CD4-positive, alpha-beta memory T cell (primary cell): ENCODE measurements at regions of chr5 and their contacts with region 1.

Region 1: DNA sequence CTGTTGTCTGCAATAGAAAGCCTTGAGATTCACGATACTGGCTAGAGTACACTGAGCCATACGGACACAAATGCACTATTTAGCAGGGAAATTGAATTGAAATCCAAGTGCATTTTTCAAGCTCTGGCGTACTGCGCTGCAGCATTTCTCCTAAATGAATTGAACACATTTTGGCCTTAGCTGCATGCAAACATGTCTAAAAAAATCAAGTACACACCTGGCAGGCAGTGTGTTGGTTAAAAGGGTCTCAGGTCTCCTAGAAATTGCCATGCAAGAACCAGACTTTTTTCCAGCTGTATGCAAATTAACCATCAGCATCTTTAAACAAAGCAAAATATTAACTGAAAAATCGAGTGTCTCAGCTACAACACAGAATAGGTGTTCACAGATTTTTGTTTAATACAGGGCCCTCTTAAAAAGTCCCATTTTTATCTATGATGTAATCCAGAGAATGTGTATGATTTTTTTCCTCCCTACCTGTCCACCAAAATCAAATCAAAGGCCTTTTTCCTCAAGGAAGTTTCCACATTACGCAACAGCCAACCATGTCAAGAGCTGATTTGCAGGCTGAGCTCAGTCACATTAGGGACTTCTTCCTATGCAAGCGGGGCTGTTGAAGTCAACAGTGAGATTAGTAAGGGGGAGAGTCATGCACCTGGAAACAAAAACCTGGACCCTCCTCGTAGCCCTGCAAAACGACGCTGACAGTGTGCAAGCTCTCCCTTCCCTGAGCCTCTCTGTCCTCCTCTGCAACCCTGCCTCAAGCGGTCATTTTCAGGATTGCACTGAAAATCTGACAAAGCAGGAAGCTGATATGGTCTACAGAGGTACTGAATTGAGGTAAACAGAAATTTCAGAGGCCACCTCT is 14.1 kb upstream of the SFXN1 start:
- DNase-seq: peak; percentile 43 to 67 (median 57)
- H3K4me3 ChIP-seq: no peak overlapping the region
- H3K4me3 Mint-ChIP-seq: peak overlapping the region in 2 of 8 donors; percentile 13 to 45
- H3K27ac ChIP-seq: no peak overlapping the region
- H3K27ac Mint-ChIP-seq: peak overlapping the region in 3 of 7 donors; percentile 13 to 69 (median 17)
- H3K4me1 ChIP-seq: peaks cover 4% of the 10 kb centered on the region
- H3K4me1 Mint-ChIP-seq: peaks cover 5 to 10% (median 6%) of the 10 kb centered on the region in 4 donors
- H3K27me3 ChIP-seq: no peaks in the 10 kb centered on the region
- H3K27me3 Mint-ChIP-seq: peaks cover 2 to 5% of the 10 kb centered on the region in 2 donors

Region 2: DNA sequence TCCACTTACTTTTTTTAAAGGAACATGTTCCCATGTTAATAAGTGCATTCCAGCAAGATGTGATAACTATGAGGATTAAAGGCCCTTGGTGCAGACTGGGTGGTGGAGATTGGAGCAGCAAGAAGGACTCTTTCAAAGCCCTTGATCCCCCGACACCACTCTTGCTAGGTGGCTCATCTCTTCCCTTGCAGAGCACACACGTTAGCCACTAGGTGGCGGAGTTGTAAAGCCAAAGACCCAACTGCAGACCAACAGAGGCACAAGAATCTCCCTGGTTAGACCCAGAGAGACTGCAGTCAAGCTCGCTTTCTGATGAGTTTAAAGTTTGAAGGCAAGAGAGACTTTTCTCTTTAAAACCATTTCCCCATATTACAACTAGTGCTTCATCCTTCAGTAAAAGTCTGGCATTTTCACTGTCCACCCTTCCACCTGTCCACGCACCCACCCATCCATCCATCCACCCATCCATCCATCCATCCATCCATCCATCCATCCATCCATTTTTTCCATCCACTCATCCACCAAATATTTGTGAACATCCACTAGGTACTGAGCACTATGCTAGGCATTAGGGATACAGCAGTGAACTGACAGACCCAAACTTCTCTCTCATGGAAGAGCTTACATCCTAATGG is 513.0 kb before region 1 on chr5:
- CTCF ChIA-PET with region 1: no interaction called
- POLR2A ChIA-PET with region 1: no interaction called
- intact Hi-C with region 1: loop called (anchors 1 kb)
- DNase-seq: peak; percentile 47 to 61 (median 52)
- H3K4me3 ChIP-seq: no peak overlapping the region
- H3K4me3 Mint-ChIP-seq: no peak overlapping the region
- H3K27ac ChIP-seq: no peak overlapping the region
- H3K27ac Mint-ChIP-seq: no peak overlapping the region
- H3K4me1 ChIP-seq: no peaks in the 10 kb centered on the region
- H3K4me1 Mint-ChIP-seq: no peaks in the 10 kb centered on the region
- H3K27me3 ChIP-seq: no peaks in the 10 kb centered on the region
- H3K27me3 Mint-ChIP-seq: peaks cover 9 to 11% of the 10 kb centered on the region in 2 donors

Region 3: GRCh38 chr5:175214152-175214551 is 250.2 kb before region 1 on chr5:
- CTCF ChIA-PET with region 1: no interaction called
- POLR2A ChIA-PET with region 1: no interaction called
- intact Hi-C with region 1: no loop called
- DNase-seq: no peak
- H3K4me3 ChIP-seq: no peak overlapping the region
- H3K4me3 Mint-ChIP-seq: no peak overlapping the region
- H3K27ac ChIP-seq: no peak overlapping the region
- H3K27ac Mint-ChIP-seq: no peak overlapping the region
- H3K4me1 ChIP-seq: no peaks in the 10 kb centered on the region
- H3K4me1 Mint-ChIP-seq: no peaks in the 10 kb centered on the region
- H3K27me3 ChIP-seq: no peaks in the 10 kb centered on the region
- H3K27me3 Mint-ChIP-seq: peaks cover 0 to 15% of the 10 kb centered on the region in 2 donors

Region 4: GRCh38 chr5:175383350-175383749 is 81.0 kb before region 1 on chr5:
- CTCF ChIA-PET with region 1: no interaction called
- POLR2A ChIA-PET with region 1: no interaction called
- intact Hi-C with region 1: no loop called
- DNase-seq: no peak
- H3K4me3 ChIP-seq: no peak overlapping the region
- H3K4me3 Mint-ChIP-seq: no peak overlapping the region
- H3K27ac ChIP-seq: no peak overlapping the region
- H3K27ac Mint-ChIP-seq: no peak overlapping the region
- H3K4me1 ChIP-seq: no peaks in the 10 kb centered on the region
- H3K4me1 Mint-ChIP-seq: no peaks in the 10 kb centered on the region
- H3K27me3 ChIP-seq: no peaks in the 10 kb centered on the region
- H3K27me3 Mint-ChIP-seq: peaks cover 2 to 10% of the 10 kb centered on the region in 2 donors

Region 5: GRCh38 chr5:175478384-175479124 is 14.2 kb after region 1 on chr5 and contains the start of gene SFXN1:
- CTCF ChIA-PET with region 1: interaction called, 45 read pairs
- POLR2A ChIA-PET with region 1: interaction called, 42 read pairs
- intact Hi-C with region 1: loop called (anchors 2 kb)
- DNase-seq: peak; percentile 69 to 80 (median 74)
- H3K4me3 ChIP-seq: peak within 1 kb of the TSS; percentile 65 to 84
- H3K4me3 Mint-ChIP-seq: peak within 1 kb of the TSS; percentile 92 to 98 (median 96)
- H3K27ac ChIP-seq: peak within 1 kb of the TSS; percentile 60
- H3K27ac Mint-ChIP-seq: peak within 1 kb of the TSS; percentile 89 to 98 (median 93)
- H3K4me1 ChIP-seq: peaks cover 47% of the 10 kb centered on the region
- H3K4me1 Mint-ChIP-seq: peaks cover 42 to 67% (median 52%) of the 10 kb centered on the region in 4 donors
- H3K27me3 ChIP-seq: no peaks in the 10 kb centered on the region
- H3K27me3 Mint-ChIP-seq: no peaks in the 10 kb centered on the region
- total RNA-seq, gene SFXN1: 99.2 to 111 TPM

Region 6: GRCh38 chr5:175487514-175488222 is 23.4 kb after region 1 on chr5:
- CTCF ChIA-PET with region 1: interaction called, 13 read pairs
- POLR2A ChIA-PET with region 1: no interaction called
- intact Hi-C with region 1: no loop called
- DNase-seq: no peak
- H3K4me3 ChIP-seq: no peak overlapping the region
- H3K4me3 Mint-ChIP-seq: peak overlapping the region in 3 of 8 donors; percentile 23 to 64 (median 44)
- H3K27ac ChIP-seq: no peak overlapping the region
- H3K27ac Mint-ChIP-seq: peak overlapping the region in 6 of 7 donors; percentile 11 to 71 (median 52)
- H3K4me1 ChIP-seq: peaks cover 80% of the 10 kb centered on the region
- H3K4me1 Mint-ChIP-seq: peaks cover 63 to 80% (median 70%) of the 10 kb centered on the region in 4 donors
- H3K27me3 ChIP-seq: no peaks in the 10 kb centered on the region
- H3K27me3 Mint-ChIP-seq: no peaks in the 10 kb centered on the region

Region 7: DNA sequence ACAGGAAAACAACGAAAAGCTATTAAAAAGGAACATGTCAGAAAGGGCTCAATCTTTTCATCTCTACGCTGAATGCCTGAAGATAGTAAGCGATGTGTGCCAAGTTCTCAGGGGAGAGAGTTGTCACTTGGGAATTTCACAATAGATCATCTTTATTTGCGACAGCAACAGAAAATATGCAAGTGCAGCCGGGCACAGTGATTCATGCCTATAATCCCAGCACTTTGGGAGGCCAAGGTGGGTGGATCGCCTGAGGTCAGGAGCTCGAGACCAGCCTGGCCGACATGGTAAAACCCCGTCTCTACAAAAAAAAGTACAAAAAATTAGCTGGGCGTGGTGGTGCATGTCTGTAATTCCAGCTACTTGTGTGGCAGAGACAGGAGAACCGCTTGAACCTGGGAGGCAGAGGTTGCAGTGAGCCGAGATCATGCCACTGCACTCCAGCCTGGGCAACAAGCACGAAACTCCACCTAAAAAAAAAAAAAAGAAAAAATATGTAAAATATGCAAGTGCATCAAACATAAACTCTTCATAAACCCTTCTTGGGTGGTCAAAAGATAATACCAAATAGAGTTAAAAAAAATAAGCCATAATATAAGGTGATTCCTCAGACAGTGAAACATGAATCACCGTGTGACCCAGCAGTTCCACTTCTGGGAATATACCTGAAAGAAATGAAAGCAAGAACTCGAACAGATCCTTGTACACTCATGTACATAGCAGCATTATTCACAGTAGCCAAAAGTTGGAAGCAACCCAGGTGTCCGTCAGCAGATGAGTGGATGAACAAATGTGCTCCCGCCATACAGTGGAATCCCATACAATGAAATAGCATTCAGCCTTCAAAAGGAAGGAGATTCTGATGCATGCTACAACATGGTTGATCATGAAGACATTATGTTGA is 30.2 kb after region 1 on chr5:
- CTCF ChIA-PET with region 1: interaction called, 15 read pairs
- POLR2A ChIA-PET with region 1: no interaction called
- intact Hi-C with region 1: no loop called
- DNase-seq: no peak
- H3K4me3 ChIP-seq: no peak overlapping the region
- H3K4me3 Mint-ChIP-seq: no peak overlapping the region
- H3K27ac ChIP-seq: no peak overlapping the region
- H3K27ac Mint-ChIP-seq: peak overlapping the region in 2 of 7 donors; percentile 43 to 63
- H3K4me1 ChIP-seq: peaks cover 15% of the 10 kb centered on the region
- H3K4me1 Mint-ChIP-seq: peaks cover 24 to 46% (median 29%) of the 10 kb centered on the region in 4 donors
- H3K27me3 ChIP-seq: no peaks in the 10 kb centered on the region
- H3K27me3 Mint-ChIP-seq: no peaks in the 10 kb centered on the region

Region 8: DNA sequence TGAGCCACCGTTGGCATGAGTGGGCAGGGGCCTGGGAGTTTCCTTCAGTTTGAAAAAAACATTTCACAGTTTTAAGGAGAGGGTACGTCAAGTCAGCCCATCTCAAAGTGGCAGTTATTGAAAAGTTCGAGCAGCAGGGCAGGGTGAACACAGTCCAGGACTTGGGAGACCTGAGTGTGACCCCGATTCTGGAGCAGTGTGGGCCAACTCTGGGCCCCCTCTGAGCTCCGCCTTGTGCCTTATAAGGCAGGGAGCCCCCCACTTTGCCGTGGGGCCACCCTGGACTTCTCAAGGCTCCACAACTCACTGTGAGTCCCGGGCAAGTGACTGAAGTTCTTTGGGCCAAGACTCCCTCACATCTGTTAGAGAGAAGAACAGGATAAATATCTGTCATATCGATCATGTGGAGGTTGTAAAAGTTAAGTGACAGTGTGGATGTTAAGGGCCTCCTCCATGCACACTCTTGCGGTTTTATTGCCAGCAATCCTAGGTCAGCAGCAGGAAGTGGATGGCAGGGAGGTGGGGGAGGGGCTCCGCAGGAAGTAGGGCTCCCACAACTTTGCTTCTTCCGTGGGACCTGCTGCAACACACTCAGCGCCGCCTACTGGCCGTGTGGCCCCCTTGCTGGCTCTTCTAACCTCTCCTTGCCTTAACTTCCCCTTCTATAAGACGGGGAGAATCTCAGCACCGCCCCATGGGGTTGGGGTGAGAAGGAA is 232.0 kb after region 1 on chr5:
- CTCF ChIA-PET with region 1: interaction called, 6 read pairs
- POLR2A ChIA-PET with region 1: no interaction called
- intact Hi-C with region 1: loop called (anchors 5 kb)
- DNase-seq: peak; percentile 65 to 70 (median 66)
- H3K4me3 ChIP-seq: no peak overlapping the region
- H3K4me3 Mint-ChIP-seq: peak overlapping the region; percentile 15 to 76 (median 64)
- H3K27ac ChIP-seq: no peak overlapping the region
- H3K27ac Mint-ChIP-seq: peak overlapping the region; percentile 73 to 91 (median 83)
- H3K4me1 ChIP-seq: peaks cover 16% of the 10 kb centered on the region
- H3K4me1 Mint-ChIP-seq: peaks cover 13 to 34% (median 23%) of the 10 kb centered on the region in 4 donors
- H3K27me3 ChIP-seq: no peaks in the 10 kb centered on the region
- H3K27me3 Mint-ChIP-seq: no peaks in the 10 kb centered on the region

Region 9: GRCh38 chr5:175718401-175719108 is 254.2 kb after region 1 on chr5:
- CTCF ChIA-PET with region 1: interaction called, 11 read pairs
- POLR2A ChIA-PET with region 1: no interaction called
- intact Hi-C with region 1: no loop called
- DNase-seq: peak; percentile 33 to 47 (median 42)
- H3K4me3 ChIP-seq: no peak overlapping the region
- H3K4me3 Mint-ChIP-seq: no peak overlapping the region
- H3K27ac ChIP-seq: no peak overlapping the region
- H3K27ac Mint-ChIP-seq: no peak overlapping the region
- H3K4me1 ChIP-seq: no peaks in the 10 kb centered on the region
- H3K4me1 Mint-ChIP-seq: peaks cover 0 to 1% (median 0%) of the 10 kb centered on the region in 4 donors
- H3K27me3 ChIP-seq: no peaks in the 10 kb centered on the region
- H3K27me3 Mint-ChIP-seq: peaks cover 0 to 2% of the 10 kb centered on the region in 2 donors

Region 10: GRCh38 chr5:176675675-176676360 is 1211.5 kb after region 1 on chr5:
- CTCF ChIA-PET with region 1: no interaction called
- POLR2A ChIA-PET with region 1: no interaction called
- intact Hi-C with region 1: no loop called
- DNase-seq: no peak
- H3K4me3 ChIP-seq: no peak overlapping the region
- H3K4me3 Mint-ChIP-seq: no peak overlapping the region
- H3K27ac ChIP-seq: no peak overlapping the region
- H3K27ac Mint-ChIP-seq: no peak overlapping the region
- H3K4me1 ChIP-seq: no peaks in the 10 kb centered on the region
- H3K4me1 Mint-ChIP-seq: no peaks in the 10 kb centered on the region
- H3K27me3 ChIP-seq: peaks cover 9% of the 10 kb centered on the region
- H3K27me3 Mint-ChIP-seq: peaks cover 24 to 45% of the 10 kb centered on the region in 2 donors